K562 (cell line): ENCODE measurements at regions of chr15 and their contacts with region 1.

Region 1: DNA sequence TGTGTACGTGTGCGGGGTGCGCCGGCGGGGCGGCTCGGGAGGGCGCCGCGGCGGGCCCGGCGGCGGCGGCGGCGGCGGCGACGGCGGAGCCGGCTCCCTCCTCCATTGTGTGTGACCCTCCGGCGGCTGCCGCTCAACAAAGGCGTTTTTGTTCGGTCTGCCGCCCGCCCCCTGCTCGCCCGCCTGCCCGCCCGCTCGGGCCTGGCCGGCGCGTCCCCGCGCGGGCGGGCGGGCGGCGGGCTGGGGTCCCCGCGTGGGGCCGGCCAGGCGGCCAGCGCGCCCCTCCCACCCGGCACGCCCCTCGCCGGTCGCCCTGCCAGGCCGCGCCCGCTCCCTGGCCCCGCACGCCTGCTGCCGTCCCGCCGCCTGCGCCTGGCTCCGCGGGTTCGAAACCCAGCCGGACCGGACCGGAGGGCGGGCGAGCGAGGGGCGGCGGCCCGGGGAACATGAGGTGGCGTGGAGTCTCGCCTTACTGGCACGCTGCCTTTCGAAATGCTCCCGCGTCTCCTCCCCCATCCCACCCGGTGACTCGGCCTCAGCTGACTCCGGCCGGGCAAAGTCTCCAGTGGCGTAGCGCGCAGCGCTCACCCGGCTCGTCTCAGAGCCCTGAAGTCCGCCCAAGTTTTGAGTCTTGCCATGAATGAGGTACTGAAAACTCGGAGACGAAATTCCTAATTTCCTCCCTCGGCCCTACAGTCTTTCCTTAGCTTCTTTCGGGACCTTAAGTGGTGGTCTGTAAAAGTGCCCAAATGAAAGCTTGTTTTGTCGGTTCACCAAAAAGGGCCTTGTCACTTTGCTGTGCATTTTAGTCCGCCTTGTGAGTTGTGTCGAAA is 585 bp downstream of the MAPK6 start:
- DNase-seq: peak; percentile 85 to 89 (median 86)
- ATAC-seq: peak; percentile 80
- H3K4me3 ChIP-seq: peak overlapping the region; percentile 78
- H3K27ac ChIP-seq: peak overlapping the region; percentile 97
- H3K4me1 ChIP-seq: peaks cover 10 to 30% of the 10 kb centered on the region in 2 experiments; a peak in 4 of 5 replicates
- H3K27me3 ChIP-seq: no peaks in the 10 kb centered on the region
- CTCF ChIP-seq: no peak
- EP300 ChIP-seq: no peak; the same call in 1 of the 2 replicates
- POLR2A ChIP-seq: peak; percentile 67
- RAD21 ChIP-seq: peak in 1 of 2 experiments; percentile 19; a peak in 1 of 4 replicates

Region 2: DNA sequence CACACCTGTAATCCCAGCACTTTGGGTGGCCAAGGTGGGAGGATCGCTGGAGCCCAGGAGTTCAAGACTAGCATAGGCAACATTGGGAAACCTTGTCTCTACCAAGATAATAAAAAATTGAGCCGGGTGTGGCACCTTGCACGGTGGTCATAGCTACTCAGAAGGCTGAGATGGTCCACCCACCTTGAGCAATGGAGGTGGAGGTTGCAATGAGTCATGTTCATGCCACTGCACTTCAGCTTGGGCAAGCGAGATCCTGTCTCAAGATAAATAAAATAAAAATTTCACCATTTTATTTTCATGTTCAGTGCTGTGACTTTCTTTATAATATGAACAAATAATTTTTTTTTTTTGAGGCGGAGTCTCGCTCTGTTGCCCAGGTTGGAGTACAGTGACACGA is 12.0 kb after region 1 on chr15:
- CTCF ChIA-PET with region 1: no interaction called
- POLR2A ChIA-PET with region 1: interaction called, 84 read pairs
- in situ Hi-C with region 1: no loop called
- intact Hi-C with region 1: no loop called
- DNase-seq: no peak
- ATAC-seq: no peak
- H3K4me3 ChIP-seq: no peak overlapping the region
- H3K27ac ChIP-seq: no peak overlapping the region
- H3K4me1 ChIP-seq: peaks cover 2 to 5% of the 10 kb centered on the region in 2 experiments; a peak in 2 of 5 replicates
- H3K27me3 ChIP-seq: no peaks in the 10 kb centered on the region
- CTCF ChIP-seq: no peak
- EP300 ChIP-seq: no peak
- POLR2A ChIP-seq: no peak
- RAD21 ChIP-seq: no peak